GM12878 (cell line): ENCODE measurements at regions of chr9 and their contacts with region 1.

Region 1: GRCh38 chr9:121213136-121213806 is 11.6 kb upstream of the RAB14 start:
- DNase-seq: no peak
- ATAC-seq: peak; percentile 63
- H3K4me3 ChIP-seq: no peak overlapping the region
- H3K27ac ChIP-seq: no peak overlapping the region
- H3K4me1 ChIP-seq: peaks cover 5% of the 10 kb centered on the region
- H3K27me3 ChIP-seq: no peaks in the 10 kb centered on the region
- CTCF ChIP-seq: peak; percentile 92 to 96 (median 96); a peak in 5 of 6 replicates
- EP300 ChIP-seq: no peak
- POLR2A ChIP-seq: no peak
- RAD21 ChIP-seq: peak; percentile 90

Region 2: DNA sequence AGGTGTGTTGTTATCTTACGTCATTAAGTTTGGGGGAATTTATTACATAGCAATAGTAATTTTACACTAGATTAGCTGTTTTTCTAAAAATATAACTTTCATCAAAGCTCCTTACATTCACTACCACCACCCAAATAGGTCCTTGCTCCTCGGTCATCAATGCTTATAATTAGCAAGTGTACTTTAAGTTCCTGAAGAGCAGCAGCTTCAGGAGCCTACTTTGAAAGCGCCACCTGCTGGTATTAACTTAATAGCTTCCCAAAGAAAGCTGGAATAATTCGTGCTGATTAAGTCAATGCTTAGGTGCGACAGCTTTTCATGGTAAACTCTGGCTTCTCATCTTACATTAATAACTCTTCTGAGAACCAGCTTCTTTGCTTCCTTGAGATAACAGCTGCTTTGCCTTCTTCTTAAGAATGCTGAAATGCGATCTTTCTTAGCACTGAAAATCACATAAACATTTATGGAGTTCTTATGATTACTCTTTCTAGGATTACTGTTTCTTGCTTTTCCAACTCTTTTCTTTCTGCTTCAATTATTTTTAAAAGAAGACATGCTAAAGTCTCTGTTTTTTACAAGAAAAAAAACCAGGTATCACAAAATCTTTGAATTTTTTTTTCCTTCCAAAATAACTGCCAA is 153.2 kb before region 1 on chr9:
- CTCF ChIA-PET with region 1: no interaction called
- POLR2A ChIA-PET with region 1: no interaction called
- RAD21 ChIA-PET with region 1: no interaction called
- SMC1A ChIA-PET with region 1: no interaction called
- in situ Hi-C with region 1: no loop called
- intact Hi-C with region 1: no loop called
- DNase-seq: no peak
- ATAC-seq: peak; percentile 80
- H3K4me3 ChIP-seq: no peak overlapping the region
- H3K27ac ChIP-seq: no peak overlapping the region
- H3K4me1 ChIP-seq: no peaks in the 10 kb centered on the region
- H3K27me3 ChIP-seq: no peaks in the 10 kb centered on the region
- CTCF ChIP-seq: peak; percentile 63 to 70 (median 68)
- EP300 ChIP-seq: no peak
- POLR2A ChIP-seq: no peak
- RAD21 ChIP-seq: peak; percentile 64

Region 3: GRCh38 chr9:121185178-121185745 is 28.0 kb before region 1 on chr9:
- CTCF ChIA-PET with region 1: interaction called, 18 read pairs
- POLR2A ChIA-PET with region 1: no interaction called
- RAD21 ChIA-PET with region 1: interaction called, 7 read pairs
- SMC1A ChIA-PET with region 1: interaction called, 14 read pairs
- in situ Hi-C with region 1: no loop called
- intact Hi-C with region 1: no loop called
- DNase-seq: no peak
- ATAC-seq: peak; percentile 55
- H3K4me3 ChIP-seq: no peak overlapping the region
- H3K27ac ChIP-seq: no peak overlapping the region
- H3K4me1 ChIP-seq: peaks cover 12% of the 10 kb centered on the region
- H3K27me3 ChIP-seq: no peaks in the 10 kb centered on the region
- CTCF ChIP-seq: no peak
- EP300 ChIP-seq: no peak
- POLR2A ChIP-seq: no peak
- RAD21 ChIP-seq: no peak

Region 4: GRCh38 chr9:121267689-121268597 is 54.7 kb after region 1 on chr9 and contains the start of gene GSN:
- CTCF ChIA-PET with region 1: interaction called, 11 read pairs
- POLR2A ChIA-PET with region 1: no interaction called
- RAD21 ChIA-PET with region 1: interaction called, 3 read pairs
- SMC1A ChIA-PET with region 1: interaction called, 7 read pairs
- in situ Hi-C with region 1: no loop called
- intact Hi-C with region 1: no loop called
- DNase-seq: no peak
- ATAC-seq: peak; percentile 94
- H3K4me3 ChIP-seq: peak within 1 kb of the TSS; percentile 87
- H3K27ac ChIP-seq: no peak within 1 kb of the TSS
- H3K4me1 ChIP-seq: peaks cover 16% of the 10 kb centered on the region
- H3K27me3 ChIP-seq: no peaks in the 10 kb centered on the region
- CTCF ChIP-seq: no peak
- EP300 ChIP-seq: no peak
- POLR2A ChIP-seq: peak; percentile 52; the same call in 1 of the 2 replicates
- RAD21 ChIP-seq: no peak
- polyA plus RNA-seq, gene GSN: 0.66 to 0.84 TPM

Region 5: DNA sequence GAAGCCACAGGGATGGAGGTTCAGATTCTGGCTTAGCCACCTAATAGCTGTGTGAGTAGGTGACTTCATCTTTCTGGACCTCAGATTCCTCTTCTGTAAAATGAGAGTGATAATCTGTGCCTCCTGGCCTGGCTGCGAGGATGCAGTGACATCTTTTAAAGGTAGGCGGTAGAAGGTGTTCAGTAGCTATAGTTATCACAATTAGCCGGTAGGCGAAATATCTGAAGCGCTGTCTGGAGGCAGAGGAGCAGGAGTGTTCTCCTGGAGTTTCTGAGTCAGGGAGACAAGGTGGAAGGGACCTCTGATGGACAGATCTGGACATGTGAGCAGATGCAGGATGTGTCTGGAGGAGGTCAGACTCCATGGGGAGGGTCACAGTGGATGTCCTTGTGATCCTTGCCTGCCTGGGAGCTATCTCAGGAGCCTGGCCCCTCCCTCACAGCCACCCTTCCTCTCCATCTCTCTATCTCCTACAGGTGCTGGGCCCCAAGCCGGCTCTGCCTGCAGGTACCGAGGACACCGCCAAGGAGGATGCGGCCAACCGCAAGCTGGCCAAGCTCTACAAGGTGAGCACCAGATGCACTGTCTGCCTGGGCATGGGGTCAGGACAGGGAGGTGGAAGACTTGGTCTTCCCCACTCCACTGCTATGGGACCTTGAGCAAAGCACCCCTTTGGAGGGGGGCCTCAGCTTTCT is 100.3 kb after region 1 on chr9:
- CTCF ChIA-PET with region 1: interaction called, 80 read pairs
- POLR2A ChIA-PET with region 1: no interaction called
- RAD21 ChIA-PET with region 1: interaction called, 17 read pairs
- SMC1A ChIA-PET with region 1: interaction called, 15 read pairs
- in situ Hi-C with region 1: loop called (anchors 5 kb)
- intact Hi-C with region 1: no loop called
- DNase-seq: no peak
- ATAC-seq: no peak
- H3K4me3 ChIP-seq: no peak overlapping the region
- H3K27ac ChIP-seq: no peak overlapping the region
- H3K4me1 ChIP-seq: no peaks in the 10 kb centered on the region
- H3K27me3 ChIP-seq: no peaks in the 10 kb centered on the region
- CTCF ChIP-seq: no peak
- EP300 ChIP-seq: no peak
- POLR2A ChIP-seq: no peak
- RAD21 ChIP-seq: no peak

Region 6: DNA sequence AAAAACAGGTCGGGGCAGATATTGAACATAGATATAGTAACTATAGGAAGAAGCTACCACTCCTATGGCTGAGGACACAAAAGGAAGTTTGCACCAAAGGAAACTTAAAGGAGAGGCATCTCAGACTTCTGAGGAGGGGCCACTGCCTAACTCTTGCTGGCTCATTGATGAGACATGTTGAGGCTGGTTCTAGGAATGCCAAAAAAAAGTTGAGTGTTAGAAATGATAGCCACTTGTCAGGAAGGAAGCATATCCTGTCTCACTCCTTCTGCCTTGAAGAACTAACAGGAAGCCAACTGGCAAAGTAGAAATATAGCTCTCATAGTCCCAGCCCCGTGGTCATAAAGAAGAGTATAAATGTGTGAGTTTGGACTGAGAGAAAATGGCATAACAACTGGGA is 180.0 kb after region 1 on chr9:
- CTCF ChIA-PET with region 1: interaction called, 58 read pairs
- POLR2A ChIA-PET with region 1: no interaction called
- RAD21 ChIA-PET with region 1: interaction called, 6 read pairs
- SMC1A ChIA-PET with region 1: no interaction called
- in situ Hi-C with region 1: loop called (anchors 5 kb)
- intact Hi-C with region 1: no loop called
- DNase-seq: no peak
- ATAC-seq: no peak
- H3K4me3 ChIP-seq: no peak overlapping the region
- H3K27ac ChIP-seq: no peak overlapping the region
- H3K4me1 ChIP-seq: no peaks in the 10 kb centered on the region
- H3K27me3 ChIP-seq: no peaks in the 10 kb centered on the region; a peak in 1 of 4 replicates
- CTCF ChIP-seq: no peak
- EP300 ChIP-seq: no peak
- POLR2A ChIP-seq: no peak
- RAD21 ChIP-seq: no peak

Region 7: DNA sequence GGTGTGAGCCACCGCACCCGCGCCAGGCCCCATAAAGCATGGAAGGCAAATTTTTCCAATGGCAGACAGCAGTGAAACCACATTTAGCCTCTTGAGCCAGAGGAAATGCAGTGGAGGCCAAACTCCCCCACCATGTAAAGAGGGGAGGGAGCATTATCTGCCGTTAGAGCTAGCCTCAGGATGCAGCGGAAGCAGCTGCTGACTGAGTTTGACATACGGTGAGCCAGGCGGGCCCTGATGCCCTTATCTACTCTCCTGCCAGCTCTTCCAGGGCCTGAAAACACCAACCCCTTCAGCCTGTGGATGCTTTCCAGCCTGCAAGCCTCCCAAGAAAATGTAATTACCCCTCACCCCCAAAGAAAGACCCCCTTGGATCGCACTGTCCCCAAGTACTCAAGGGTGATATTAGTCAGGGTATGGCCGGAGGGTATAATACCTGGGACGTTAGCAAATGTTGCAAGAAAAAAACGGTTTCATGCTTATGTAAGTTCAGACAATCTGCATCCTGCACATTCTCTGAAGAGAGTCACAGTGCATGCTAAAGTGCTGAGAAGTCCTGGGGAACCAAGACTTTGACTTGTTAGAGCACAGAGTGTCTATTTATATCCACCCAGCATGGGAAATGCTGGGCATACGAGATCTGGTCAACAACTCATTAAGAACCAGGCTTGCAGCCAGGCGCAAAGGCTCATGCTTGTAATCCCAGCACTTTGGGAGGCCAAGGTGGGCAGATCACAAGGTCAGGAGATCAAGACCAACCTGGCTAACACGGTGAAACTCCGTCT is 297.7 kb after region 1 on chr9:
- CTCF ChIA-PET with region 1: no interaction called
- POLR2A ChIA-PET with region 1: no interaction called
- RAD21 ChIA-PET with region 1: no interaction called
- SMC1A ChIA-PET with region 1: no interaction called
- in situ Hi-C with region 1: no loop called
- intact Hi-C with region 1: no loop called
- DNase-seq: no peak
- ATAC-seq: no peak
- H3K4me3 ChIP-seq: no peak overlapping the region
- H3K27ac ChIP-seq: no peak overlapping the region
- H3K4me1 ChIP-seq: no peaks in the 10 kb centered on the region
- H3K27me3 ChIP-seq: no peaks in the 10 kb centered on the region
- CTCF ChIP-seq: no peak
- EP300 ChIP-seq: no peak
- POLR2A ChIP-seq: no peak
- RAD21 ChIP-seq: no peak

Region 8: DNA sequence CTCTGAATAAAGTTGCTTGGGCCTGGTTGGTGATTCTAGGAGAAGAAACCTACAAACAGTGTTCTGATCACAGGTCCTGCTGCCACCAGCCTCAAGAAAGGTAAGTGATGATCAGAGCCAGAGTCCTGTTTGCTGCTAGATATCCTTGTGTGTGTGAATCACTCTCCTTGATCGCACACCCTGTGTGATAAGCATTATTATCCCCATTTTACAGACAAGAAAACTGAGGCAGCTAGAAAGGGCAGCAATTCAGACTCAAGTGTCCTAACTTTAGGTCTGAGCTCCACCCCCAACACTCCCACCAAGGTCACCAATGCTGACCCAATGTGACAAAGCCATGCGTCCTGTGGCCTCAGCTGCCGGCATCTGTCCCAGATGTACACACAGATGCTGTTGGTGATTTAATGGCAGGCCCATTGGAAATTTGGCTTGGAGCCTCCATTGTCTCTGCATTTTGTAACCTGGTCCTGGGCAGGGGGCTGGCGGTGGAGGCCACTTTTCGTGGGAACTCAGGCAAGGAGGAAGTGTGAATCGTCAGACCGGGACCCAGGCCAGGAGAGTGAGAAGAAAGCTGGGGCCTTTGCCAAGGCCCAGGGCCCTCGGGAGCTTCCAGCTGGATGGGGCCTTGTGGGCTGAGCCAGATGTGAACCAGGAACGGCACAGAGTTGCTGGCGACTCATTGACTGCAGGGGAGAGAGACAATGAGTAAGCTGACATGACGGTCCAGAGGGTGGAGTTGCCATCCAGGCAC is 316.1 kb after region 1 on chr9:
- CTCF ChIA-PET with region 1: no interaction called
- POLR2A ChIA-PET with region 1: no interaction called
- RAD21 ChIA-PET with region 1: no interaction called
- SMC1A ChIA-PET with region 1: no interaction called
- in situ Hi-C with region 1: no loop called
- intact Hi-C with region 1: no loop called
- DNase-seq: no peak
- ATAC-seq: no peak
- H3K4me3 ChIP-seq: no peak overlapping the region
- H3K27ac ChIP-seq: no peak overlapping the region
- H3K4me1 ChIP-seq: no peaks in the 10 kb centered on the region
- H3K27me3 ChIP-seq: no peaks in the 10 kb centered on the region
- CTCF ChIP-seq: no peak
- EP300 ChIP-seq: no peak
- POLR2A ChIP-seq: no peak
- RAD21 ChIP-seq: no peak